ENCODE measurements at regions of chrX and their contacts with region 1.

Region 1: DNA sequence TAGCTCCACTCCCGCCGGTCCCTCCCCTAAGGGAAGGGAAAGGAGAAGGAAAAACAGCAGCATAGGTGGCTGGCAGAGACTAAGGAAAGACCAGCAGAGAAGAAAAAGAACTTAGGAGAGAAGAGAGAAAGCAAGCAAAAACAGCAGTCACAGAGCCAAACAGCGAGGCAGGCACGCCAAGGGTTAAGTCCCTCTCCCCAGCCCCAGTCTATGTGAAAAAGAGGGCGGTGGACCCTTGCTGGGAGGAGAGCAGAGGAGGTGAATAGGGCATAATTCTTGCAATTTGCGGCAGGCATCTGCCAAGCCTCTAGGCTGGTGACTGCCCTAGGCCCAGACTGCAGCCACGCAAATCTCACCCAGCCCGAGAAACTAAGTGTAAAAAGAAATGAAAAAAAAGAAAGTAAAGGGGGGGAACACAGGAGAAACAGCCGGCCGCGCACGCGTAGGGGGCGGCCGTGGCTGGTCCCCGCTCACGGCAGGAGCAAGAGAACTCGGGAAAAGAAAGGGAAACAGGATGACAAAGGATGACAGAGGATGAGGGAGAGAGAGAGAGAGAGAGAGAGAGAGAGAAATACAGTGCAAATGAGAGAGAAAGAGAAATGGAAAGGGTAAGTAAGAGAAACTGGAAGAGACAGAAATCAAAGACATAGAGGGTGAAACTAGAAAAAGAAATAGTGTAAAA is 48.6 kb downstream of the MAGEA9 start:
- DNase-seq: peak; percentile 17
- ATAC-seq: peak; percentile 72
- H3K4me3 ChIP-seq: peak overlapping the region; percentile 15
- H3K27ac ChIP-seq: peak overlapping the region; percentile 5; the same call in 1 of the 2 replicates
- H3K4me1 ChIP-seq: no peaks in the 10 kb centered on the region
- H3K27me3 ChIP-seq: no peaks in the 10 kb centered on the region
- CTCF ChIP-seq: no peak
- POLR2A ChIP-seq: no peak
- RAD21 ChIP-seq: no peak

Region 2: DNA sequence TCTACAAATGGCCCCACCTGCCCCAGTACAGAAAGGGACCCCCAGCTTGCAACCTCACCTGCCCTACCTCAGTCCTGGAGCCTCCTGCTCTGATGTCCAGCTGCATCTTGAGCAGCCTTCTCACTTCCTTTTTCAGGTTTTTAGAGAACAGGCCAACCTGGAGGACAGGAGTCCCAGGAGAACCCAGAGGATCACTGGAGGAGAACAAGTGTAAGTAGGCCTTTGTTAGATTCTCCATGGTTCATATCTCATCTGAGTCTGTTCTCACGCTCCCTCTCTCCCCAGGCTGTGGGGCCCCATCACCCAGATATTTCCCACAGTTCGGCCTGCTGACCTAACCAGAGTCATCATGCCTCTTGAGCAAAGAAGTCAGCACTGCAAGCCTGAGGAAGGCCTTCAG is 114.9 kb before region 1 on chrX:
- CTCF ChIA-PET with region 1: no interaction called
- POLR2A ChIA-PET with region 1: no interaction called
- dilution Hi-C with region 1: no loop called
- in situ Hi-C with region 1: loop called (anchors 25 kb)
- intact Hi-C with region 1: no loop called
- DNase-seq: no peak
- ATAC-seq: no peak
- H3K4me3 ChIP-seq: no peak overlapping the region
- H3K27ac ChIP-seq: no peak overlapping the region
- H3K4me1 ChIP-seq: no peaks in the 10 kb centered on the region
- H3K27me3 ChIP-seq: peaks cover 2% of the 10 kb centered on the region; the same call in 1 of the 2 replicates
- CTCF ChIP-seq: no peak
- POLR2A ChIP-seq: no peak
- RAD21 ChIP-seq: no peak